MCF 10A (cell line): ENCODE measurements at regions of chr17 and their contacts with region 1.

Region 1: DNA sequence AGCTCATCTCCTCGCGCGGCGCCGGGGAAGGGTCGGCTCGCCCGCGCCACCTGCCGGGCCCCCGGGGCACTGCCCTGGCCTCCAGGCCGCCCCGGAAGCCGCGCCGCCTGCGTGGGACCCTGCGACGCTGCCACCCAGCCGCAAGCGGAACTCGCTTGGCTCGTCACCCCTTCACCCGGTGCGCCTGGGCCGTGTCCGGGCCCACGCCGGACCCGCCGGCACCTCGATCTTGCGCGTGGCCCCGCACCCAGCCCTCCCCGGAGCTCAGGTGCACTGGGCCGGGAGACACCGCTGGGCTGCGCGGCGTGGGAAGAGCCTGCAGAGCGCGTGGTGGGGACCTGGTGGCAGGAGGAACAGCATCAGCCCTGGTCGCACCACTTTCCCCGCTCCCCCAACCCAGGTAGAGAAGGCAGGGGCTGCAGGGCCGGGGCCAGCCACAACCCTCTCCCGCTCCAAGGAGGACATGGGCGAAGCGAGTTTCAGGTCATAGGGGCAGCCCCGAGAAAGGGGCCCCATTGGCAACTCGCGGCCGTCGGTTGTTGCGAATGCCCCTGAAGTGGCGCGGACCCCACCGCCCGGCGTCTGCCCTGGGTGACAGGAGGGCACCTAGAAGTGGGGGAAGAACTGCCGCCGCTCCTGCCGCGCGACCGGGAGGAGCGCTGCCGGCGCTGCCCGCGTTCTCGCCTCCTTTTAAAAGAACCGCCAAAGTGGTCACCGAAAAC is 363 bp upstream of the MIF4GD start:
- DNase-seq: peak; percentile 74
- H3K4me3 Mint-ChIP-seq: peak overlapping the region; percentile 74
- H3K27ac Mint-ChIP-seq: peak overlapping the region; percentile 39
- H3K4me1 Mint-ChIP-seq: peaks cover 23% of the 10 kb centered on the region
- H3K27me3 Mint-ChIP-seq: no peaks in the 10 kb centered on the region
- CTCF ChIP-seq: peak; percentile 67

Region 2: GRCh38 chr17:75096082-75096625 is 175.2 kb before region 1 on chr17:
- CTCF ChIA-PET with region 1: no interaction called
- POLR2A ChIA-PET with region 1: no interaction called
- intact Hi-C with region 1: no loop called
- DNase-seq: peak; percentile 97
- H3K4me3 Mint-ChIP-seq: peak overlapping the region; percentile 62
- H3K27ac Mint-ChIP-seq: peak overlapping the region; percentile 98
- H3K4me1 Mint-ChIP-seq: peaks cover 35% of the 10 kb centered on the region
- H3K27me3 Mint-ChIP-seq: no peaks in the 10 kb centered on the region
- CTCF ChIP-seq: no peak

Region 3: DNA sequence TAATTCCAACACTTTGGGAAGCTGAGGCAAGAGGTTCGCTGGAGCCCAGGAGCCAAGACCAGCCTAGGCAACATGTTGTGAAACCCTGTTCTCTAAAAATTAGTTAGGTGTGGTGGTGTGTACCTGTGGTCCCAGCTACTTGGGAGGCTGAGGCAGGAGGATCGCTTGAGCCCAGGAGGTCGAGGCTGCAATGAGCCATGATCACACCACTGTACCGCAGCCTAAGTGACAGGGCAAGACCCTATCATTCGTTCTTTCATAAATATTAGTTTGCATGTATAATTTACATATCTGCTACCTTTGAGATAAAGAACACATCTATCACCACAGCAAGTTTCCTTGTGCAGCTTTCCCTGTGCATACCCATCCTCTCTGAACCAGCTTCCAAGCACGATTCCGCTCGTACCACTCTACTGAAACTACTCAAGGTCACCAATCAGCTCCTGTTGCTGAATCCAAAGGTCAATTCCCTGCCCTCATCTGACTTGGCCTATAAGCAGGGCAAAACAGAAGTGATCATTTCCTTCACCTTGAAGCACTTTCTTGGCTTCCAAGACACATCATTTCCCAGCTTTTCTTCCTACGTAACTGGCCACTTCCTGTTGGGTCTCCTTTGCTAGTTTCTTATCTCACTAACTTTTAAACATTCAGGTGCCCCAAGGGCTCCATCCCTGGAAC is 85.0 kb after region 1 on chr17:
- CTCF ChIA-PET with region 1: no interaction called
- POLR2A ChIA-PET with region 1: no interaction called
- intact Hi-C with region 1: no loop called
- DNase-seq: no peak
- H3K4me3 Mint-ChIP-seq: no peak overlapping the region
- H3K27ac Mint-ChIP-seq: no peak overlapping the region
- H3K4me1 Mint-ChIP-seq: peaks cover 6% of the 10 kb centered on the region
- H3K27me3 Mint-ChIP-seq: no peaks in the 10 kb centered on the region
- CTCF ChIP-seq: no peak

Region 4: DNA sequence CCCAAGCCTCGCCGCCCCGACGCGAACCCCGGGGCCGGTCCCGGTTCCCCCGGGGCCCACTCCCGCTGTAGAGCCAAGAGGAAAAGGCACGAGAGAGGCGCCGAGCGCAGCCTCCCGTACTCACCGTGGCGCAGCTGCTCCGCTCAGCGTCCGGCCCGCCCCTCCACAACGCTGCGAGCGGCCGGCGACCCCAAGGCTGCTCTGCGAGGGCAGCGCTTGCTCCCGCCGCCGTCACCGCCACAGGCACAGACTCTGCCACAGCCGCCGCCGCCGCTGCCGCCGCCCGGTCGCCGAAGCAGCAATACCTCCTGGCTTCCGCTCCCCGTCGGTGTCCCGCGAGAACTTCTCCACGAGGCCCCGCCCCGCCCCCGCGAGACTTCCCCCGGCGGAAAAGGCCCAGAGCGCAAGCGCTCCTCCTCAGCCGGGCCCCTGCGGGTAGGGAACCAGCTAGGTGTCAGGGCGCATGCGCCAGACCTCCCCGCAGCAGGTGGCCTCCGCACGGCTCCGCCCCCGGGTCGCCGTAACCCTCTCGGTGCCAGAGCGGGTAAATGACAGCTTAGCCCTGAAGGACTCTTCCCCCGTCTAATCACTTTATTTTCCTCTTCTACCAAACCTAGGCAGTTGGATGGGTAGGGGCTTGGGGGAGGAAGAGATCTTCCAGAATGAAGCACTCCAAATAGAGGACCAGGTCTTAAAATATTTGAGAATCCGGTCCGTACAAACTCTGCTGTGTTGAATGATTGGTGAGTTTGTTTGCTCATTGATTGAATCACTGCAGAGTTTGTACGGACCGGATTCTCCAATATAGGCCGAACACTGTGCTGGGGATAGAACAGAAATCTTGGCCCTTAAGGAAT is 134.2 kb after region 1 on chr17 and contains the start of gene GRB2:
- CTCF ChIA-PET with region 1: interaction called, 7 read pairs
- POLR2A ChIA-PET with region 1: interaction called, 16 read pairs
- intact Hi-C with region 1: loop called (anchors 1 kb)
- DNase-seq: peak; percentile 96
- H3K4me3 Mint-ChIP-seq: peak within 1 kb of the TSS; percentile 88
- H3K27ac Mint-ChIP-seq: peak within 1 kb of the TSS; percentile 80
- H3K4me1 Mint-ChIP-seq: peaks cover 11% of the 10 kb centered on the region
- H3K27me3 Mint-ChIP-seq: no peaks in the 10 kb centered on the region
- CTCF ChIP-seq: no peak
- total RNA-seq, gene GRB2: 67.1 and 74.6 TPM in 2 replicates

Region 5: DNA sequence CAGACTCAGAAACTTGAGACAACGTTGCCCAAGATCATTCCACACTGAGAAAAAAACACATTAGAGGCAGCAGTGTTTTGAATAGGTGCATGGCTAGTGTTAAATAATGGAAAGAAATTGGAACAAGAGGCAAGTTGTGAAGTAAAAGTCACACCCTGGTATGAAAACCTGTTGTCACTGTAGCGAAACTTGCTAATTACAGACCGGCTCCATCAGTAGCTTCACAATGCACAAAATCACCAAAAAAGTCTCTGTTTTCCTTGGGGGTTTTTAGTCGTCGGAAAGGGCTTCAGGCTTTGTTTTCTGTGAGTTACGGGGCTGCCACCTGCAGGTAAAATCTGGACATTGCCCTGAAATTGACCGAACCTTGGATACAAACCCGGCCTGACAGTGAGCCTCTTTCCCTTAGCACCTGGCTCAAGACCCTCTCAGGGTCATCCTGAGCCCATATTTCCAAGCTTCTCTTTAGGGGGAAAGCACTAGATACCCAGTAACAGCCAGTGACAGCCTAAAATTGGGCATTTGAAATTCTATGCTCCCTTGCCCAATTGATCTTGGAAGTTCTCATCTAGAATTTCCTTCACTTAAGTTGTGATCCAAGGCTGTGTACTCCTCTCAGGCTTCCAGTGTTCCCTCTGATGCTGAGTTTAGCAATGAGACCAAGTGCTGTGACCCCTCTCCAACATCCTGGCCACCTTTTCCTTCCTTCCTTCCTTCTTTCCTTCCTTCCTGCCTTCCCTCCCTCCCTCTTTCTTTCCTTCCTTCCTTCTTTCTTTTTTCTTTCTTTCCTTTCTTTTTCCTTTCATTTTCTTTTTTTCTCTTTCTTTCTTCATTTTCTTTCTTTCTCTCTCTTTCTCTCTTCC is 141.3 kb after region 1 on chr17:
- CTCF ChIA-PET with region 1: interaction called, 7 read pairs
- POLR2A ChIA-PET with region 1: interaction called, 3 read pairs
- intact Hi-C with region 1: loop called (anchors 2 kb)
- DNase-seq: peak; percentile 74
- H3K4me3 Mint-ChIP-seq: peak overlapping the region; percentile 35
- H3K27ac Mint-ChIP-seq: peak overlapping the region; percentile 76
- H3K4me1 Mint-ChIP-seq: peaks cover 11% of the 10 kb centered on the region
- H3K27me3 Mint-ChIP-seq: peaks cover 30% of the 10 kb centered on the region
- CTCF ChIP-seq: peak; percentile 82